A549 (cell line): ENCODE measurements at regions of chr20 and their contacts with region 1.

Region 1: DNA sequence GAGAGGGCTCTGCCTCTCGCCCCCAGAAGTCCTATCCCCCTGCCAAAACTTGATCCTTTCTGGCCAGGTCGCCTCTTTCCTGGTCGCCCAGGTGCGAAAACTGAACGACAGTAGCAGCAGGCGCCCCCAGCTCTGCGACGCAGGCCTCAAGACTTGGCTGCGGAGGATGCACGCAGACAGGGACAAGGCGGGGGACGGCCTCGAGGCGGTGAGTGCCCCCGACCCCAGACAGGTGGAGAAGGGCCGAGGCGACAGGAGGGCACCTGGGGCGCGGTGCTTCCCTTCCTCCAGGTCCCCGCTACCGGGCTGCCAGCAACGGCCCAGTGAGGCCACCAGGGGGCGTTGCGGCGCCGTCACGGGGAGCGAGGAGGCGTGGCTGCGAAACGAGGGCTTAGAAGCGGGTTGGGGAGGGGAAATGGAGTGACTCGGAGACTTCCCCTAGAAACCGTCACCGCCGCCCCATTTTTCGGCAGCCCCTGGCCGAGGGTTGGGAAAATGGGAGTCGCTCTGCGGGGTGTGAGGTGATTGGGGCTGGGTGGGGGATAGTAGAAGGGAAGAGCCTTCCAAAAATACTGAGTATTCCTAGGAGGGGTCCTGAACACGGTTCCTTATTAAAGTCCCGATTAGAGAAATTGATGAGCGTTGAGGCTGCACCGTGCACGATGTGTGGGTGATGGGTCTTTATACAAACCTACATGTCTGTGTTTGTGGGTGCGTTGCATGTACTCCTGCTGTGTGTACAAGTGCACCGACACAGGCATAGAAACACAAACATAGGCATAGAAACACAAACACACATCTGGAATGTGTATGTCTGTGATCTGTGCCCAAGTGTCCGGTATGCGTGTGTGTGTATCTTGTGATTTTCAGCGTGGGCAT is 44.6 kb downstream of the ARHGAP40 start:
- DNase-seq: peak; percentile 71 to 86
- ATAC-seq: peak; percentile 75 to 93
- H3K4me3 ChIP-seq: peak overlapping the region; percentile 38; the same call in 2 of the 3 replicates
- H3K27ac ChIP-seq: peak overlapping the region; percentile 23 to 78; a peak in 4 of 6 replicates
- H3K4me1 ChIP-seq: 0 out of 3 replicates have a peak, but pooled peaks cover 4% of the 10 kb centered on the region
- CTCF ChIP-seq: peak; percentile 85
- EP300 ChIP-seq: no peak
- POLR2A ChIP-seq: no peak
- RAD21 ChIP-seq: peak; percentile 80 to 90

Region 2: DNA sequence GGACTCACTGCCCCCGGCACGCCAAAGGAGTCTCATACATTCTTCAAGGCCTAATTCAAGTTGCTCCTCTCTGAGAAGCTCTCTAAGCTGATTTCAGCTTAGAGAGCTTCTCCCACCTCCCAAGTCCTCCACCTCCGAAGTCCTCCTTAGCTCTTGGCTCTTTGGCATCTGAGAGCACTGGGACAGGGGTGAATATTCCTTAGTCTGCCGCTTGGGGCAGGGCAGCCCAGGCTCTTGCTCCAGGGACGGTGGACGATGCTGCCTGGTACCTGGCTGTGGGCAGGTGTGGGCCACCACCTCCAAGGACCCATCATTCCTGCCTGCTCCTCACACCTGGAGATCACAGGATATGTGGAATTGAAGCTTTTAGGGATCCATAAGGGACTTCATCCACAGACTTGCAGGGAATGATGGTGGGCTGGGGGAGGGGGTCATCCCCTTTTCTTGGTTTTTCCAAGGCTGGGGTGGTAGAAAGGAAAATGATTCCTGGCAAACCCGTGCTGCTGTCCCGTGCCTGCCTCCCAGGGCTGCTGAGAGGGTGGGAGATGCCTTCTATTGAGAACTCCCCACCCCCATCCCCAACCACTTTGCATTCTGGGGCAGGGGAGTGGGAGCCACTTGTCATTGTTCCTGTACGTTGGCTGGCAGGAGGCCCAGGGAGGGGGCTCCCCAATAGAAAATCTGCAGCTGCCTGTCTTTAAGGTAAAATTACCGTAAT is 12.8 kb after region 1 on chr20:
- CTCF ChIA-PET with region 1: interaction called, 71 read pairs
- POLR2A ChIA-PET with region 1: no interaction called
- DNase-seq: peak; percentile 38 to 79
- ATAC-seq: peak; percentile 93 to 98
- H3K4me3 ChIP-seq: no peak overlapping the region
- H3K27ac ChIP-seq: no peak overlapping the region
- H3K4me1 ChIP-seq: no peaks in the 10 kb centered on the region
- CTCF ChIP-seq: peak; percentile 44
- EP300 ChIP-seq: no peak
- POLR2A ChIP-seq: no peak
- RAD21 ChIP-seq: peak in 1 of 2 experiments; percentile 45; a peak in 3 of 5 replicates

Region 3: DNA sequence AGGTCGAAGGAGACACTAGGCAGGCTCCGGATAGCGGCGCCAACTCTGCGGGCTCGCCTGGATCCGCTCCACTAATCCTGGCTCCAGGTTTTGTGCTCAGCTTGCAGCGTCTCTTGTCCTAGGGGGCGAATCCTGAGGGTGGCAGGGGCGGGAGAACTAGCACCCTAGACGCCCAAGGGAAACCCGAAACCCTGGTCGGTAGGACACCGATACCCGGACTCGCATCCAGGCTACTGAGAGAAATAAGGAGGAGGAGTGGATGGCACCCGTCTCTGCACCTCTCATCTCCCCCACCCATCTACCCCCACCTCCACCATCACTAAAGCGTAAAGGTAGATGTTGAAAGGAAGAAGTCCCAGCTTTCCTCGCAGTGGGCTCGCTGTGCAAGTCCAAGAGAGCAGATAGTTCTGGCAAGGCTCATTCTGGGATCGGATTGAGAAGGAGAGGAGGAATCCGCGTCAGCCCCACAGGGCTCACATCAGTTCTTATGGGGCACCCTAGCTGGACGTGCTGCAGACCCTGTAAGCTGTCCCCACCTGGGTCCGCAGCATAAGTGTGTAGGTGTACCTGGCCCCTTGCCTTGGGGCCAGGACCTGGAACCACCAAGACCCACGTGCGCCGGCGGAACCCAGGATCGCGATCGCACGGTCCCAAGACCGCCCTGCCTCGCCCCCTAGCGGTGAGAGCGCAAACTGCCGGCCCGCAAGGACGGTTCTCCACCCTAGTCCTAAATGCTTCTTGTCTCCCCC is 84.9 kb after region 1 on chr20:
- CTCF ChIA-PET with region 1: interaction called, 34 read pairs
- POLR2A ChIA-PET with region 1: no interaction called
- DNase-seq: peak; percentile 79 to 93
- ATAC-seq: peak; percentile 79 to 92
- H3K4me3 ChIP-seq: peak overlapping the region; percentile 57
- H3K27ac ChIP-seq: peak overlapping the region; percentile 59; a peak in 5 of 6 replicates
- H3K4me1 ChIP-seq: peaks cover 5% of the 10 kb centered on the region; the same call in 1 of the 3 replicates
- CTCF ChIP-seq: peak; percentile 84
- EP300 ChIP-seq: no peak
- POLR2A ChIP-seq: 0 out of 2 replicates have a peak, but pooled peaks have one; percentile 5
- RAD21 ChIP-seq: peak; percentile 56 to 60

Region 4: GRCh38 chr20:38764567-38765355 is 118.5 kb after region 1 on chr20:
- CTCF ChIA-PET with region 1: interaction called, 10 read pairs
- POLR2A ChIA-PET with region 1: no interaction called
- DNase-seq: peak; percentile 86
- ATAC-seq: peak; percentile 99
- H3K4me3 ChIP-seq: 0 out of 3 replicates have a peak overlapping the region, but pooled peaks have one; percentile 11
- H3K27ac ChIP-seq: peak overlapping the region; percentile 79 to 84
- H3K4me1 ChIP-seq: peaks cover 29% of the 10 kb centered on the region
- CTCF ChIP-seq: no peak
- EP300 ChIP-seq: no peak
- POLR2A ChIP-seq: no peak
- RAD21 ChIP-seq: no peak; a peak in 1 of 5 replicates

Region 5: GRCh38 chr20:38893565-38894090 is 247.4 kb after region 1 on chr20:
- CTCF ChIA-PET with region 1: interaction called, 58 read pairs
- POLR2A ChIA-PET with region 1: no interaction called
- DNase-seq: peak; percentile 63 to 83
- ATAC-seq: peak; percentile 89 to 97
- H3K4me3 ChIP-seq: peak overlapping the region; percentile 37
- H3K27ac ChIP-seq: peak overlapping the region; percentile 53 to 76; a peak in 5 of 6 replicates
- H3K4me1 ChIP-seq: peaks cover 9% of the 10 kb centered on the region; the same call in 1 of the 3 replicates
- CTCF ChIP-seq: peak; percentile 82
- EP300 ChIP-seq: no peak
- POLR2A ChIP-seq: no peak
- RAD21 ChIP-seq: peak; percentile 78 to 89

Region 6: GRCh38 chr20:39133201-39133600 is 487.0 kb after region 1 on chr20:
- CTCF ChIA-PET with region 1: no interaction called
- POLR2A ChIA-PET with region 1: no interaction called
- DNase-seq: no peak
- ATAC-seq: no peak
- H3K4me3 ChIP-seq: no peak overlapping the region
- H3K27ac ChIP-seq: no peak overlapping the region
- H3K4me1 ChIP-seq: no peaks in the 10 kb centered on the region
- CTCF ChIP-seq: no peak
- EP300 ChIP-seq: no peak
- POLR2A ChIP-seq: no peak
- RAD21 ChIP-seq: no peak